GM10248 (cell line): ENCODE measurements at regions of chr3 and their contacts with region 1.

Region 1: DNA sequence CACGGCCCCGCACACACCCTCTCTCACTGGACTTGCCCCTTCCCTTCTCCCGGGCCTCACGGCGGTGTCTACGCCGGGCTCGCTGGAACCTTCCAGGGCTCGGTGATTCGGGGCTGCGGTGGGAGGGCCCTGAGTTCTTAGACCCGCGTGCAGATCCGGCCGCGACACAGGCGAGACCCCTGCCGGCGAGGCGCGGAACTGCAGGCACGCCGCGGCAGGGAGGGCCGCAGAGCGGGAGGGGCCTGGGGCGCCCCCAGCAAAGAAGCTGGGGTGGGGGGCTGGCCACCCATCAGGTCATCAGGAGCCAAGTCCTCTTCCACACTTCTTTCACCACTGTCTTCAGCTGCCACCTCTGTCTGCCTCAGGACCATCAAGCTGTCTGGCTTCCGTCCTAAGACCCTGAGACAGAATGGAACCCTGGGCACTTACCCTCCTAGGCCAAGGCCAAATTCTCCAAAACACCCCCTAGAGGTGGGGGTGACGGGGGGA is 164.5 kb downstream of the XXYLT1 start:
- DNase-seq: peak; percentile 86
- CTCF ChIP-seq: peak; percentile 99

Region 2: DNA sequence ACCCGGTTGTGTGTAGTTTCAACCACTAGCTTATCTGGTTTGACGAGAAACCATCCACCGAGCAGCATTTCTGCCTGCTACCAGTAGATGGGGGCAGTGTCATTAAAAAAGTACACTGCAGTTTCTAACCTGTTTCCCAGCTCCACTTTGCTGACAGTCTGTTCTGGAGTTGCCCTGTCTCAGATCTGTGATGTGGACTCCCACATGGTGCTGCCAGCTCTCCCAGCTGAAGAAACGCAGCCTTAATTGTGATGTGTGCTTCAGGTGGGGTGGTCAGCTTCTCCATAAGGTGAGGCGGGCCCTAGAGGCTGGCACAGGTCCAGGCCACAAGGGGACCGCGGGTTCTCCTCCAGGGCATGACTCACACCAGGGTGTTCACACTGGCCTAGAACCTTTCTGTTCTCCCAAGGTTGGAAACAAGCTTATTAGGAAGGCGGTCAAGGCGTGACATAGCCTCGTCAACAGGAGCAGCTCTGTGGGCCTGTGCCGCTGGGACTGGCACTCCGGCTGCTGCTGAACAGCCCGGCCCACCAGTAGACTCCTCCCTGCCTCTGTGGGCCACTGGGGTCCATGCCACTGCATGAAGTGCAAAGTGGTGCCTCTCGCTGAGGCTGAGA is 423.7 kb before region 1 on chr3:
- CTCF ChIA-PET with region 1: interaction called, 27 read pairs
- POLR2A ChIA-PET with region 1: no interaction called
- DNase-seq: peak; percentile 82
- CTCF ChIP-seq: peak; percentile 76

Region 3: DNA sequence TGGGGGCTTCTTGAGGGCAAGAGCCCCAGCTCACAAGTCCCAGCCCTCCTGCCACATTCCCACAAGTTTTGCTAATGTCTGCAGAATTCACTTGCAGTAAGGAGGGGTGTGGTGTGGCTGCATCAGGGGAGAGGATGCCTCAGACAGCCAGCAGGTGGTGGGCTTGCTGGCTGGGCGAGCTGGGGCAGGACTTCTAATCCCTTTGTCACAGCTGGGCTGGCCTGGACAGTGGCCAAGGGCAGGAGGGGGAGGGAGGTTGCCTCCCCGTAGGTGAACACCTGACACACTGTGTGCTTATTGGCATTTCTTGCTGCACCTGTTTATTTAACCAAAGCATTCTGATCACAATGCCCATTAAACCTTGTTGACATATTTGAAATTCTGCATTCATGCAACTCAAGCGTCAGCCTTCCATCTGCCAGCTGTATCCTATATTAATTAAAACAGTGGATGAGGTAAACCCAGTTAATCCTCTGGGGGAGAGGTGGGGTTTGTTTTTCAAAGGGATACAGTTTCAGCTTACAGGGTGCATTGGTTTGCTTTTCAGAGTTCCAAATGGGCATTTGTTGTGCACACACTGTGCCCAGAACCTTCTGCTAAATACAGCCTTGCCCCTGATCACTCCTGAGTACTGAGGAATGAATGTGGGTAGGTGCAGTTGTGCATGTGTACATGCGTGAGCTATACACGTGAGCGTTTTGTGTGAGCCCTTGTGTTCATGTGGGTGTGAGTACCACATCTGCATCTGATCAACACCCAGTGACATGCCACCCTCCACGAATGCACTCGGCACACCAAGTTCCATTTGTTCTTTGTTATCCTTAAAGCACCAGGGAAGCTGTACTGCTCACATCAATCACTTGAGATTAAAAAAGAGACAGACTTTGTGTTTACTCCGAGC is 104.3 kb before region 1 on chr3:
- CTCF ChIA-PET with region 1: interaction called, 30 read pairs
- POLR2A ChIA-PET with region 1: no interaction called
- DNase-seq: peak; percentile 74
- CTCF ChIP-seq: peak; percentile 66

Region 4: GRCh38 chr3:195094171-195094921 is 12.1 kb before region 1 on chr3:
- CTCF ChIA-PET with region 1: interaction called, 19 read pairs
- POLR2A ChIA-PET with region 1: interaction called, 3 read pairs
- DNase-seq: peak; percentile 69
- CTCF ChIP-seq: no peak

Region 5: DNA sequence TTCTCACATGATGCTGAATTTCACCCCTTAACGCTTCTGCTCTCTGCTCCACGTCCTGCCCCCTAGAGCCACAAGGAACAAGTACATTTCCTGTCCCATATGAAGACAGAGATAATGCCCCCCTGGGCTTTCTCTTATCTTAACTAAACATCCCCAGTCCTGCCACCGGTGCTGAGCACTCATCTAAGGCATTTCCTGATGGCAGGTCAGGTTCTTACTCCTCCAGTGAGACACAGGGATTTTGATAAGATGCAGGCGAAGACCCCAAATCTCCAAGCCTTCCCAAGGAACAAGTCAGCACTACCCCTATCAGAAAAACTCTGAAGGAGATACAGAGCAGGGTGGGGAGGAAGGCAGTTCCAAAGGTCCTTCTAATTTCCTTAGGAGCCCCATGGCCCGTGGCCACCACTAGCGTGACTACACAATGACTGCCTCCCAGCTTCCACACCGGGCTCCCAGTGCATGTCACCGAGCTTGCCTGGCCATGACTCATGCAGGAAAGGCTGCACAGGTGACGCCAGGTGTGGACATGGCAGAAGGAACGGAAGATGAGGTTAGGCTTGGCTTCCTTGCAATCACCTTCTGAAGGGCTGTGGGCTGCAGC is 11.6 kb after region 1 on chr3:
- CTCF ChIA-PET with region 1: interaction called, 78 read pairs
- POLR2A ChIA-PET with region 1: no interaction called
- DNase-seq: no peak
- CTCF ChIP-seq: no peak

Region 6: DNA sequence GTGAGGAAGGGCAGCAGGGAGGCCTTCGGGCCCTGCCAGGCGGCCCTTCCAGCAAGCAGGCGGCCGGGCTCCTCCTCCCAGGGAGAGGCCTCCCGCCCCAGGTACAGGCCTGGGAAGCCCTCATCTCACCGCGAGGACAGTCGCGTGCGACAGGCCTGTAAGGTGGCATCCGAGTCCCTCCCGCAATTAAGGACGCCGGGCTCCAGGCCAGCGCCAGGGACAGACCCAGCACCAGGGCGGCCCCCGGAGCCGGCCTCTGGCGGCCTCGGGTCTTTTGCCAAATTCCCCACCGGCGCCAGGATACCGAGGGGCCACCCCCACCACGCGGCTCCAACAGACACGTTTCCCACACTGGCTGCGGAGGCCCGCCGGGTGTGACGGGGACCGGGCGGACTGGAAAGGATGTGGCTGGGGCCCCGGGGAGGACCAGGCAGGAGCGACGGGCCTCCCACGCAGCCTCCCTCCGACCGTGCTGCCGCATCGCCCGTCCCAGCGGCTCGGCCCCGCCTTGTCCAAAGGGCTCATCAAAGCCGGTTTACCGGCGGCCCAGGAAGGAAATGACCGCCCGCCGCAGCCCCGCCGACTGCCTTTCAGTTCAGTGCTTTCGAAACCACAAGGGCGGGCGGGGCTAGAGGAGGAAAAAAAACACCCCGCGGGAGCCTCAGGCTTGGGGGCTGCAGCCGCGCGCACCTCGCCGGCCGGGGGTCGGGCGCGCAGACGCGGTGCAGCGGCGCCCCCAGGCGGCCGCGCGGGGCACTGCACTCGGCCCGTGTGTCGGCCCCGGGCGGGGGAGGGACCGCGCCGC is 153.2 kb after region 1 on chr3:
- CTCF ChIA-PET with region 1: interaction called, 11 read pairs
- POLR2A ChIA-PET with region 1: no interaction called
- DNase-seq: peak; percentile 95
- CTCF ChIP-seq: peak; percentile 97